ENCODE measurements at regions of chr6 and their contacts with region 1.

Region 1: DNA sequence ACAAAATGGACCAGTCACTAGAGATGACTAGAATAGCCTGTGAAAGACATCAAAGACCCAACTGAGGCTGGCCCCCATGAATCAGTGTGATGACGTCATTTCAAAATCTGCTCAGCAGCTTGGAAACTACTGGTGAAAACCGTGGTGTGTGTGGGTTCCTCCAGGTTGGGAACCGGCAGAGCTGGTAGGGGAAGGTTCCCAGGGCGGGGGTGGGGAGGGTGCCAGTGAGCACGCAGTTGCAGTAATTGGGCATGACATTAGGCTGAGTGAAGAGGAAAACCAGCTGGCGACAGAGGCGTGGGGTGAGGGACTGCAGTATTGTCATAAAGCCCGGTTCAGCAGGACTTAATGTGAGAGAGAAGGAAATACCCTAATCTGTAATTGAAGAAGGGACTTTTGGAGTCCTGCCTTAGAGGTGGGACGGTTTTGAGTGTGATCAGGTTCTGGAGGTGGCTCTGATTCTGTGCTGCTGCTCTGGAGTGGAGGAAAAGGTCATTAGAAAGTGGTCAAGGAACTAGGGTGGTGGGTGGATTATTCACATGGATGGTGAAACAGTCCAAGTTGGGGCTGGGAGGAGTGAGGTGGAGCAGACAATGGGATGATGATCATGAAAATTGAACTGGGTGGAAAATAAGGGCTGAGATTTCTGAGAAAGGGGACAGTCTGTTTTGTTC is 52.0 kb upstream of the MTHFD1L start:
- DNase-seq: peak; percentile 71
- CTCF ChIP-seq: no peak

Region 2: DNA sequence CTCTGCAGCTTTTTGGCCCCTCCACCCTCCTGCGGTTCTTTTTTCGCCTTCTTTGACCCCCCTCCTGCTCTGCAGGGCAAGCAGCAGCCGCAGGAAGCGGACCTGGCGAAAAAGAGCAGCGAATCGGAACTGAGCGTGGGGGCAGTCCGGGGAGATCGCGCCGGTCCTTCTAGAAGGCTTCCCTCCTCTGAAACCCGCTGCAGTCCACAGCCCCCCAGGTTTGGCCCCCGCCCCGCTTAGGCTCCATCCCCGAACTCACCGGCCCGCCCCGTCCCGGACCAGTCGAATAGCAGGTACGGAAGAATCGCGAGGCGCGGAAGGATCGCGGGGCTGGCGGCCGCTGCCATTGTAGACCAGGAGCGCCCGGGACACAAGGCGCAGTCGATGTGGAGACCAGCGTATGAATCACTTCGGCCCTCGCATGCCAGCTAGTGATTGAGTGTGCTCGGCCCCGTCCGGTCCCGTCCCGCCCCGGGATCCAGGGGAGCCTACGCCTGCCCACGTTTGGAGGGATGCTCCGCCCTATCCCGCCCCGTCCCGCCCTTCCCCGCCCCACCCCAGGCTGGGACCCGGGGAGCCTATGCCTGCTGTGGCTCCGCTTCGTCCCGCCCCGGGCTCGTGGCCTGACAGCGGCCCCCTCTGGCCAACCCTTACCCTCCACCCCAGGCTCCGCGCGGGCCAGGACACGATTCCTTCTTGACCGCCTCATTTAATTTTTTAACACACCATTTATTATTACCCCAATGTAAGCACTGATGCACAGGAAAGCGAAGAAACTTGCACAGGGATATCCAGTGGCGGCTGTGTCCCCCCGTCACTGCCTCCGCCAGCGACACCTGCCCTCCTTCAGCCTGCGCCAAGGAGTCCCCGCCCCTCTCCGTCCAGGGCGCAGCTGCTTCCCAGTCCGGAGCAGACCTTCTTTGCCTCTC is 744.5 kb before region 1 on chr6 and contains the start of gene ULBP3:
- in situ Hi-C with region 1: loop called (anchors 25 kb)
- DNase-seq: peak; percentile 80
- CTCF ChIP-seq: peak; percentile 42

Region 3: DNA sequence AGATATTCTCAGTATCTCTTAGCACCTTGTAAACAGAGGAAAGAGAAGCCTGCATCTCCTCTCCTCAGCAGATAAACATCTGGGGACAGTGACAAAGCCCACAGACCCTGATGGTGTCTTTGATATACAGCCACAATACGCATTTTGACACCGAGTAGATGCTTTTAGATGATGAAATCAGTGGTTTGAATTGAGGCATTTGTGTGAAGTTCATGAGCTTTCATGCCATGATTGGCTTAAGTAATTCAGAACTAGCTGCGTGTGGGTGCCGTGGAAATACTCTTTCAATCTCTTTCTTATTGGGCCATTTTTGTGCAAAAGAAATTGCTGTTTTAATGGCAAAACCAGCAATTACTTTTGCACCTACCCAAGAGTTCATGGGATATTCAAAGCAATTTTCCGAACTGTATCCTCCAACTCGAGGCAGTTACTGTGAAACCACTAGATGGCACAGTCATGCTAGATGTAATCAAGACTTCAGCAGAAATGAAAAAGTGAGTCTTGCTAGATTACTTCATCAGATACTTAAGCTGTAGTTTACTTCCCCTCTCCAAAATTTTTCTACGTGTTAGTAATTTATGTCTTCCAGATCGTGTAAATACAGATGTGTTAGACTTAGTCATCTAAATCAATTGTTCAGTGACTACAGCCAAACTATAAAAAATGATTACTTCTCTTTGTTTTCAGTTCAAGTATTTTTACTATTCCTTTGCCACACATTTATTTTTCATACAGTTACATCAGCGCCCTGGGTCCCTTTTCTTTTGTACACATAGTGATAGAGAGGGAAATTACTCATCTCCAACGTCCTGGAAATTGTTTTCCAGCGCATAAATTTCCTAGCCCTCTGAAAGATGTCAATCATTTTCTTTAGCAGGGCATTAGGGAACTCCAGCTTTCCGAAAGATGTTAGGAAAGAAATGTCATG is 395.3 kb before region 1 on chr6:
- in situ Hi-C with region 1: loop called (anchors 10 kb)
- DNase-seq: peak; percentile 77
- CTCF ChIP-seq: peak; percentile 82

Region 4: GRCh38 chr6:150560004-150560883 is 253.2 kb before region 1 on chr6:
- in situ Hi-C with region 1: no loop called
- DNase-seq: no peak
- CTCF ChIP-seq: no peak